ENCODE measurements at regions of chr5 and their contacts with region 1.

Region 1: GRCh38 chr5:74640450-74640953 is at the start of gene ENC1:
- DNase-seq: peak; percentile 94
- H3K4me3 Mint-ChIP-seq: peak within 1 kb of the TSS; percentile 92
- H3K27ac Mint-ChIP-seq: peak within 1 kb of the TSS; percentile 64
- H3K4me1 Mint-ChIP-seq: peaks cover 54% of the 10 kb centered on the region
- H3K27me3 Mint-ChIP-seq: no peaks in the 10 kb centered on the region
- CTCF ChIP-seq: peak; percentile 62
- total RNA-seq, gene ENC1: 91.6 and 100 TPM in 2 replicates

Region 2: GRCh38 chr5:73826301-73827105 is 814.0 kb before region 1 on chr5:
- CTCF ChIA-PET with region 1: interaction called, 4 read pairs
- intact Hi-C with region 1: loop called (anchors 10 kb)
- DNase-seq: no peak
- H3K4me3 Mint-ChIP-seq: no peak overlapping the region
- H3K27ac Mint-ChIP-seq: no peak overlapping the region
- H3K4me1 Mint-ChIP-seq: peaks cover 32% of the 10 kb centered on the region
- H3K27me3 Mint-ChIP-seq: no peaks in the 10 kb centered on the region
- CTCF ChIP-seq: no peak

Region 3: DNA sequence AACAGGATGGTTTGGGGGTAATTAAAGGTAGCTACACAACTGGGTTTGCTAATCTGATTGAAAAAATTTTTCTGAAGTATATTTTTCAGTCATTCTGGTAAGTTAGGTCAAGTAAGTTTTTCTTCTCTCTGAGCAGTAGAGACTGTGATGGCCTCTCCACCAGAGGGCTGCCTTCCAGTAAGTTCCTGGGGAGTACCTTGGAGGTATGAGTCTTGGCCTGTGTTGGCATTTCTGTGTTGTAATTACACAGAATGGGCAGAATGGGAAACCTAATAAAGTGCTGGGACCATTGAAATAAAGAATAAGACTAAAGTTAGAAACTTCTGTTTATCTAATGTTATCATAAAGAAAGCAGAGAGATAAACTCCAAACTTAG is 583.7 kb before region 1 on chr5:
- CTCF ChIA-PET with region 1: no interaction called
- intact Hi-C with region 1: loop called (anchors 2 kb)
- DNase-seq: peak; percentile 62
- H3K4me3 Mint-ChIP-seq: no peak overlapping the region
- H3K27ac Mint-ChIP-seq: no peak overlapping the region
- H3K4me1 Mint-ChIP-seq: peaks cover 8% of the 10 kb centered on the region
- H3K27me3 Mint-ChIP-seq: no peaks in the 10 kb centered on the region
- CTCF ChIP-seq: peak; percentile 41

Region 4: DNA sequence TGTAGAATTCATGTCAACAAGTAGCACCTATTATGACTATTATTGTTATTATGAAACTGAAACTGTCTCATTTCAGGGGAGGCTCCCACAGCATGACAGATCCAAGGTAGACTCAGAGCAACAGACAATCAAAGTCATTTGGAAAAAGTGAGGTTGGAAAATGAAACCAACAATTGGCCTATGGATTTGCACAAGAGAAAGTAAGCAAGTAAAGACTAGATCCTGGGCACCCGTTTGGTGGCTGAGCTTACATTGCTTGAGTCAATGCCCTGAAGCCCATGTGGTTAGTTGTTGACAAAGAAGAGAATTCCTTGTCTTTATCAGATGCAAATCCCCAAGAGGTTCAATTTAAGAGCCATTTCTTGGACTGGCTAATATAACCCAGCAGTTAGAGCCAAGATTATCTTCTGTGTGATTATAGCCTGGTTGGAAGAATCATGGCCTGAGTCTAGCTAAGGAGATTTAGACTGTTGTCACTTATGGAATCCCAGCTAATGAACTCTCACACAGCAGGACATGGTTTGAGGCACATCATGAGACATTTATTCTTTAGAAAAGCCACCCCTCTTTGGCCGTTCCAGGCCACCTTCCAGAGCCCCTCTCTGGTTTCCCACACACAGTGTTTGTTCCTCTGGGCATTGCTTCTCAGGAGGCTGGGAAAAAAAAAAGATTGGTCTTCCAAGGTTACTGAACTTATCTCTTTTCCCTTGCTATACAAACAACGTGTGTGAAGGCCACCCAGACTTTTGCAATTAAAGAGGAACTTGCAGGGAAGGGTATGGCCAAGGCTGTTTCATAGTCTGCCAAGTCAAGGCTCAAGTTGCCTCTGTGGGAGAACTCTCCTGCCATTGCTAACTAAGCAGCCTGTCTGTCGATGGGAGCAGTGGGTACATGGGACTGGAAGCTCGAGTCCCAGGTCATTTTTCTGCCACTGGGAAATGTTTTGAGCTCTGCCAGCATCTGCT is 399.4 kb before region 1 on chr5:
- CTCF ChIA-PET with region 1: no interaction called
- intact Hi-C with region 1: loop called (anchors 5 kb)
- DNase-seq: no peak
- H3K4me3 Mint-ChIP-seq: no peak overlapping the region
- H3K27ac Mint-ChIP-seq: peak overlapping the region; percentile 73
- H3K4me1 Mint-ChIP-seq: peaks cover 46% of the 10 kb centered on the region
- H3K27me3 Mint-ChIP-seq: no peaks in the 10 kb centered on the region
- CTCF ChIP-seq: no peak

Region 5: DNA sequence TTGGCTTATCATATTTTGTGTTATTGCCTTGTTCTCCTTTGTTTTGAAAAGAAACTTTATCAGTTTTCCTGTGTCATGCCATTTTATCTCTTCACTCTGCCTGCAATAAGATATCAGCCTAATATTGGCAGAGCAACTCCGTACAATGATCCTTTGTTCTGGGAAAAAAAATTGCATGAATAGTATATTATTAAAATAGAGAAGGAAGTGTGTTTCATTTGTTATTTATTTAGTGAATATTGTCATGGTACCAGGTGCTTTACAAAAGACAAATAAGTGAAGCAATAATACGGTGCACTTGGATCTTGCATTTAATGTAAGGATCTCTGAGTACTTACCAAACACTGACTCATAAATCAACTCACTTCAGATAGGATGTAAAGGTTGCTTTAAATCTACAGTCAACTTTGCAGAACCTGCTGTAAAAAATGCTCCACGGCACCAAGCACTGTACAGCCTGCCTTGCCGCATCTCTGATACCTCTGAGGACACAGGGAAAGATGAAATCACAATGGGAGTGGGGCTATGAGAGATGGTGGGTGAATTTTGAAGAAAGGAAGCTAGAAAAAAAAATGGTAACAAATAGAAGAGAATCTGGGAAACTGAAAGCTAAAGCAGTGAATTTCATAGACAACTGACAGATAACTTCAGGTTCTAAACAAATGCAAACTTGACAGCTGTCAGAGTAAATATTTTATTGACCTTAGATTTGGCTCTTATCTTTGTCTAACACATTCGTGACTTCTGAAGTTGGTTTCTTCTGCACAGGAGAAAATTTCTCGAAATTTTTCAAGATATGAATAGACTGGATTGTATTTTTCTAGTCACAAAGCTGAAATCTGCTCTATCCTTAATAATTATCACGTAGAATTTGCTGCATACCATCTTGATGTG is 232.1 kb before region 1 on chr5:
- CTCF ChIA-PET with region 1: interaction called, 4 read pairs
- intact Hi-C with region 1: loop called (anchors 2 kb)
- DNase-seq: no peak
- H3K4me3 Mint-ChIP-seq: peak overlapping the region; percentile 63
- H3K27ac Mint-ChIP-seq: peak overlapping the region; percentile 82
- H3K4me1 Mint-ChIP-seq: peaks cover 54% of the 10 kb centered on the region
- H3K27me3 Mint-ChIP-seq: no peaks in the 10 kb centered on the region
- CTCF ChIP-seq: no peak

Region 6: DNA sequence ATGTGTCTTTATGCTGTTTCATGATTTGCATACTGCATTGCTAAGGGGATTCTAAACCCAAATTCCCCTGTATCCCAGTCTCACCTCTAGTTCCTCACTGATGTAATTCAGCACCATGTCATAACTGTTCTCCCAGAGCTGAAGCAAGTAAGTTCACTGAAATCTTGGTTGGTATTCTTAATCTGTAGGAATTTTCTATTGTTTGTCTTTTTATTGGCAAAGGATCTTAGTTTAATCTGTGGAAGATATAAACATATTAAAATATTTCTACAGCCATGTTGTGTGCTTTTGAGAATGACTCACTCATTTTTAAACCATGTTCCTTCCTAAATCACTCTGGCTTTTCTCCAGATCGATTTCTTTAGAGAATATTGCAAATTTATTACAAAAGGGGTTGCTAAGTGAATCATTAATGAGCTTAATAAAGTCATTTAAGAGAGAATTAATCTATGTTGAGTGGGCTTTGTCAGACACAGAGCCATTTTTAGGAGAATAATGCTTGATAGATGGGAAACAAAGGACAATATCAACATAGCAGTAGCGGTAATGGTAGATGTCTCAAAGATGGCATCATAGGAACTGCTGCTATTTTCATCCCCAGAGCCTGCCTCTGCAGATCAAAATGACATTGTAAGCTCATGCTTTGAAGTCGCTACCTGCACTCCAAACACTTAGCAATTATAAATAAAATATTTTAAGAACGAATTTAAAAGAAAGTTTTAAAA is 110.0 kb before region 1 on chr5:
- CTCF ChIA-PET with region 1: no interaction called
- intact Hi-C with region 1: no loop called
- DNase-seq: no peak
- H3K4me3 Mint-ChIP-seq: no peak overlapping the region
- H3K27ac Mint-ChIP-seq: no peak overlapping the region
- H3K4me1 Mint-ChIP-seq: peaks cover 12% of the 10 kb centered on the region
- H3K27me3 Mint-ChIP-seq: no peaks in the 10 kb centered on the region
- CTCF ChIP-seq: no peak

Measured in Calu3 (cell line).